GM23248 (cell line): ENCODE measurements at regions of chr5 and their contacts with region 1.

Region 1: GRCh38 chr5:39283231-39283818 is 64.0 kb upstream of the FYB1 start:
- DNase-seq: peak; percentile 84
- H3K4me3 ChIP-seq: no peak overlapping the region
- H3K27ac ChIP-seq: no peak overlapping the region
- H3K4me1 ChIP-seq: no peaks in the 10 kb centered on the region
- H3K27me3 ChIP-seq: no peaks in the 10 kb centered on the region

Region 2: GRCh38 chr5:38994324-38994927 is 288.9 kb before region 1 on chr5:
- in situ Hi-C with region 1: loop called (anchors 25 kb)
- DNase-seq: peak; percentile 83
- H3K4me3 ChIP-seq: no peak overlapping the region
- H3K27ac ChIP-seq: no peak overlapping the region
- H3K4me1 ChIP-seq: no peaks in the 10 kb centered on the region
- H3K27me3 ChIP-seq: no peaks in the 10 kb centered on the region

Region 3: DNA sequence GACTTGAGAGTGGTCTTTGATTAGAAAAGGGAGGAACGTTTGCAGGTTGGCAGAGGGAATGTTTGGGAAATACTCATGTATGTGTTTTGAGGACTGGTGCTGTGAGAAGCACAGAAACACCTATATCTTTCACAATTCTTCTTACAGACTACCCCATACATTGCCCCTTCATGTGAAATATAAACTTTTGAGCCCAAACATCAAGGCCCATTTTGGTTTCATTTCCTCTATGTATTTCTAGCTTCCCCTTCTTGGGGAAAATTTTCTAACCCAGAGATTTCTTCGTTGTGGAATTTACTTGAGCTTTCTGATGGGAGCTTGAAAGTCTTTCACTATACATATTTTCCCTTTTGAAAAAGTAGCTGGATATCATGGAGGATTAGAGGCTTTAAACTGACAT is 131.6 kb before region 1 on chr5:
- in situ Hi-C with region 1: loop called (anchors 5 kb)
- DNase-seq: no peak
- H3K4me3 ChIP-seq: no peak overlapping the region
- H3K27ac ChIP-seq: no peak overlapping the region
- H3K4me1 ChIP-seq: no peaks in the 10 kb centered on the region
- H3K27me3 ChIP-seq: no peaks in the 10 kb centered on the region